ENCODE measurements at regions of chr16 and their contacts with region 1.

Region 1: GRCh38 chr16:20409398-20410120 is at the start of gene ACSM5:
- DNase-seq: peak in 1 of 2 donors; percentile 68
- H3K4me3 ChIP-seq: no peak within 1 kb of the TSS
- CTCF ChIP-seq: no peak
- POLR2A ChIP-seq: no peak
- total RNA-seq, gene ACSM5: 1.5 to 5.5 (median 2.9) TPM

Region 2: GRCh38 chr16:20327444-20328041 is 82.0 kb before region 1 on chr16 and contains the start of gene GP2:
- intact Hi-C with region 1: no loop called
- DNase-seq: no peak
- H3K4me3 ChIP-seq: no peak within 1 kb of the TSS
- CTCF ChIP-seq: no peak
- POLR2A ChIP-seq: no peak
- total RNA-seq, gene GP2: 0.46 to 3.7 (median 2.3) TPM in 3 of 4 donors, not detected in the other

Region 3: GRCh38 chr16:20938426-20938825 is 528.9 kb after region 1 on chr16:
- intact Hi-C with region 1: loop called (anchors 5 kb)
- DNase-seq: no peak
- H3K4me3 ChIP-seq: no peak overlapping the region
- CTCF ChIP-seq: no peak
- POLR2A ChIP-seq: no peak